Activated CD4-positive, alpha-beta T cell treated with anti-CD3 and anti-CD28 coated beads for 36 hours (primary cell): ENCODE measurements at regions of chr4 and their contacts with region 1.

Region 1: DNA sequence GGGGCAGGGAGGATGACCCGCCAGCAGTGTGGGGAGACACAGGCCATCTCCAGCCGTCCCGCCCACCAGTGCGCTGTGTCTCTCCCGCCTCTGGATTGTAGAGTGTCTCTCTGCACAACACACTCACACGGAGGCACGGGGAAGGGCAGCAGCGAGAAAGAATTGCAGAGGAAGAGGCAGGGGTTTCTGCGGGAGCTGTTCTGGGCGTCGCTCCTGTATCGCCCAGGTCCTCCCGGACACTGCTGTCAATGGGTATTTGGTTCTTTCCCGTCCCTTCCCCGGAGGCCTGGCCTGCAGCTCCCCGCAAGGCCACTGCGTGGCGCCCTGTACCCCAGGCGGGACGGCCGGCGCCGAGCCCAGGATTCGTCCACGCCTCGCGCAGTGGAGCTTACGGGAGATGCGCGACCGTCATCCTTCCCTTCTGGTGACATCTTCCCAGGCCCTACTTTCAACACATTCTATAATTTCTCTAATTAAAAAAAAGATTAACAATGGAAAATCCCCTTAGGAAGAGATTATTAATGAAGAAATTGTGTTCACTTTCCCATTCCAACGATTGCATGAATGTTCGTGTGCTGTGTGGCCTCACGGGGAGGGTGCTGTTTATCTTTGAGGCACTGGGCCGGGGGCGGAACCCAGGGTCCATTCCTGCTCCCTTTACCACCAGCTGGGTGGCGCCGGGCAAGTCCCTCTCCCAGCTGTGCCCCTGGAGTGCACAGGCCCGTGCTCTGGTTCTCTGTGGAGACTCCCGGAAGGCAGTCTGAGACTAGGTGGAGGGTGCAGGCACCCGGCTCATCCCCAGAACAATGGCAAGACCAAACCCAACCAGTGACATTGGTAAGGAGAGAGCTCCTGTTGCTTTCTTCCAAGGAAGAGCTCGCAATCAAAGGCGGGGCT is 95.7 kb downstream of the CPZ start:
- DNase-seq: peak; percentile 52
- ATAC-seq: no peak
- H3K4me3 Mint-ChIP-seq: no peak overlapping the region
- H3K27ac Mint-ChIP-seq: no peak overlapping the region
- H3K4me1 Mint-ChIP-seq: no peaks in the 10 kb centered on the region
- H3K27me3 Mint-ChIP-seq: peaks cover 11% of the 10 kb centered on the region

Region 2: DNA sequence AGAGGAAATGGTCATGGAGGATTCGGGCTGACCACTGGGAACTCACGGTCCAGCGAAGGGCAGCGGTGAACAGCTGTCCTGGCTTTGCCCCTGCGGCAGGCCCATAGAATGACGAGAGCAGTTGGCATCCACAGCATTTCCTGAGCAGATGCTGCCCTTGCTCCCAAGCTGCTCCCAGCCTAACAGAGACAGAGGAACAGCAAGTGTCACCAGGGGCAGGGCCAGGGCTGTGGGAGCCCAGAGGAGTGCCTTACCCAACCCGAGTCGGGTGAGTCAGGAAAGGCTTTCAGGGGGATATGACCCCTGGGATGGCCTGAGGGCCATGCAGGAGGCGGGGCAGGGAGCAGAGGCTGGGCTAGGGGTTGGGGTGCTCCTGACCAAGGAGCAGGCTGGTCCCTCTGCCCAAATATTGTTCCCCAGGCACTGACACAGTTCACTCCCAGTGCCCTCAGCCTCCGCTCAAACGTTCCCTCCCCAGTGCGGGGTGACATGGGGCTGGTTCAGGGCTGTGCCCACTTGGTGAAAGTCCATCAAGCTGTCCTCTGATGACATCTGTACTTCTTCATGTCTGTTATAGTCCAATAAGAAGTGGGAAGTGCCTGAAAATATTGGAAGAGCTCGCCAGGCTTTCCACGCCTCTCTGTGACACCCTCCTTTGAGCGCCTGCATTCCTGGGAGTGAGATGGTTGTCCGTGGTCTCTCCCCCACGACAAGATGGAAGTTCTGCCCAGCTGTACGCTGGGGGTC is 172.8 kb before region 1 on chr4:
- CTCF ChIA-PET with region 1: no interaction called
- POLR2A ChIA-PET with region 1: no interaction called
- intact Hi-C with region 1: no loop called
- DNase-seq: no peak
- ATAC-seq: no peak
- H3K4me3 Mint-ChIP-seq: no peak overlapping the region
- H3K27ac Mint-ChIP-seq: no peak overlapping the region
- H3K4me1 Mint-ChIP-seq: no peaks in the 10 kb centered on the region
- H3K27me3 Mint-ChIP-seq: no peaks in the 10 kb centered on the region

Region 3: GRCh38 chr4:8886612-8887406 is 198.5 kb after region 1 on chr4:
- CTCF ChIA-PET with region 1: no interaction called
- POLR2A ChIA-PET with region 1: no interaction called
- intact Hi-C with region 1: loop called in 1 of 2 experiments (anchors 1 kb)
- DNase-seq: no peak
- ATAC-seq: no peak
- H3K4me3 Mint-ChIP-seq: no peak overlapping the region
- H3K27ac Mint-ChIP-seq: no peak overlapping the region
- H3K4me1 Mint-ChIP-seq: no peaks in the 10 kb centered on the region
- H3K27me3 Mint-ChIP-seq: peaks cover 43% of the 10 kb centered on the region

Region 4: DNA sequence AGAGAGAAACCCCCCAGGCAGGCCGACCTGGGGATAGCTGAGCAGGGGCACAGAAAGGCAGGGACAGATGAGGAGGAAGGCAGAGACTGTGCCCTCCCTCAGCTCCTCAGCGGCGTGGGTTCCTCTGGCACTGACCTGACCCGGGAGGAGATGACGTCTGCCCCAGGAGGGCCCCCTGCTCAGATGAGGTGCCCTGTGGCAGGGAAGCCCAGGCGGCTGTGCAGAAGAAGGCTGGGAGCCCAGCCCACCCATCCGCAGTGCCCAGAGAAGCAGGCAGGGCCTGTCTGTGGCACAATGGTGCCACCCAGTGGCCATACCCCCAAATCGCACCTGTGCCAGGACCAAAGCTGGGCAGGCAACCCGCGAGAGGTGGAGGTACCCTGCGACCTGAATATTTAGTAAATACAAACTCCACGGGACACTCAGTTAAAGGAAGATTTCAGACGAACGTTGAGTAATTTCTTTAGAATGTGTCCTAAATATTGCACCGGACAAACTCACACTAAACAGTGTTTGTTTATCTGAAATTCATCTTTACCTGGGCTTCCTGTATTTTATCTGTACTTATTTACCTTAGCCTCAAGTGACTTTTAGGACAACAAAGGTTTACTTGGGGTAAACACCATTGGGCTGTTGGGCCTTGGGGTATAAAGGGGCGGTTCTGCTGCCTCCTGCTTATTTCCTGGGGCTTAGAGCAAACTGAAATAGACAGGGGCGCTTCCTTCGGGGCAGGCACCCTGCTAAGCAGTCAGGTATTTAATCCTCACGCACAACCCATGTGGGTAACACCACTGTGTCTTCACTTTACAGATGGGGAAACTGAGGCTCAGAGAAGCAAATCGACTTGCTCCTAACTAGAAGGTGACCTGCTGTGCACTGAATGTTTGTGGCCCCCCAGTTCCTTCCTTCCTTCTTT is 229.8 kb after region 1 on chr4:
- CTCF ChIA-PET with region 1: interaction called, 10 read pairs
- POLR2A ChIA-PET with region 1: no interaction called
- intact Hi-C with region 1: loop called in 1 of 2 experiments (anchors 1 kb)
- DNase-seq: peak; percentile 82
- ATAC-seq: peak; percentile 77
- H3K4me3 Mint-ChIP-seq: no peak overlapping the region
- H3K27ac Mint-ChIP-seq: no peak overlapping the region
- H3K4me1 Mint-ChIP-seq: no peaks in the 10 kb centered on the region
- H3K27me3 Mint-ChIP-seq: peaks cover 6% of the 10 kb centered on the region